ENCODE measurements at regions of chr5 and their contacts with region 1.

Region 1: DNA sequence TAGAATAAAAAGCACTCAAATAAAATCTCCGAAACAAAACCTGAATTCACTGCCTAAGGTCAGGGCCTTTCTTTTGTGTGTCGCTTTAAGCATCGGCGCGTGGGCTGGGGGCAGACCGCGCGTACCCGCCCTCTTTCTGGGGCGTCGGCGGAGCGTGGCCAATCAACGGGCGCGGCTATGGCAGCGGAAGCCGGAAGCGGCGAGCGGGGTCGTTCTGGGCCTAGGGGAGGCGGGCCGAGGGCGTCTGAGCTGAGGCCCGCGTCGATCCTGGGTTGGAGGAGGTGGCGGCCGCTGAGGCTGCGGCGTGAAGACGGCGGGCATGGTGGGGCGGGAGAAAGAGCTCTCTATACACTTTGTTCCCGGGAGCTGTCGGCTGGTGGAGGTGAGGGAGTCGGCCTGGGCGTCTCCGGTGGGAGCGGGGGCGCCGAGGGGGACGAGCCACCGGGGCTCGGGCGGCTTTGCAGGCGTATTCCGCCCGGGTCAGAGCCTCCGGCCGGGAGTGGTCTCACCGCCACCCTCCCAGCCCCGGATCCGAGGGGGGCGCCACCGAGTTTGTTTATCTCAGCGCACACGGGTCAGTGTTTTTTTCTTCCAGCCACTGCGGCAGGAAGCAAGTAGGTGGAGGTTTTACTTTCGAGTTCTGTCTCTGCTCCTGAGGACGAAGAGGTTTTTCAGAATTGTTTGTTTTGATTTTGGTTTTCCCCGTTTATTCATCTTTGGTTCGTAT is at the start of gene MAT2B:
- DNase-seq: peak; percentile 95
- ATAC-seq: peak; percentile 86
- H3K4me3 ChIP-seq: peak within 1 kb of the TSS; percentile 90
- H3K27ac ChIP-seq: peak within 1 kb of the TSS; percentile 56
- H3K4me1 ChIP-seq: peaks cover 33% of the 10 kb centered on the region
- H3K27me3 ChIP-seq: no peaks in the 10 kb centered on the region
- CTCF ChIP-seq: peak; percentile 64
- total RNA-seq, gene MAT2B: 24.3 and 25.6 TPM in 2 replicates

Region 2: GRCh38 chr5:163379298-163380155 is 126.0 kb before region 1 on chr5:
- CTCF ChIA-PET with region 1: no interaction called
- POLR2A ChIA-PET with region 1: no interaction called
- intact Hi-C with region 1: loop called (anchors 5 kb)
- DNase-seq: peak; percentile 94
- ATAC-seq: peak; percentile 91
- H3K4me3 ChIP-seq: peak overlapping the region; percentile 47; the same call in 1 of the 2 replicates
- H3K27ac ChIP-seq: peak overlapping the region; percentile 97
- H3K4me1 ChIP-seq: peaks cover 29% of the 10 kb centered on the region
- H3K27me3 ChIP-seq: no peaks in the 10 kb centered on the region
- CTCF ChIP-seq: no peak

Region 3: DNA sequence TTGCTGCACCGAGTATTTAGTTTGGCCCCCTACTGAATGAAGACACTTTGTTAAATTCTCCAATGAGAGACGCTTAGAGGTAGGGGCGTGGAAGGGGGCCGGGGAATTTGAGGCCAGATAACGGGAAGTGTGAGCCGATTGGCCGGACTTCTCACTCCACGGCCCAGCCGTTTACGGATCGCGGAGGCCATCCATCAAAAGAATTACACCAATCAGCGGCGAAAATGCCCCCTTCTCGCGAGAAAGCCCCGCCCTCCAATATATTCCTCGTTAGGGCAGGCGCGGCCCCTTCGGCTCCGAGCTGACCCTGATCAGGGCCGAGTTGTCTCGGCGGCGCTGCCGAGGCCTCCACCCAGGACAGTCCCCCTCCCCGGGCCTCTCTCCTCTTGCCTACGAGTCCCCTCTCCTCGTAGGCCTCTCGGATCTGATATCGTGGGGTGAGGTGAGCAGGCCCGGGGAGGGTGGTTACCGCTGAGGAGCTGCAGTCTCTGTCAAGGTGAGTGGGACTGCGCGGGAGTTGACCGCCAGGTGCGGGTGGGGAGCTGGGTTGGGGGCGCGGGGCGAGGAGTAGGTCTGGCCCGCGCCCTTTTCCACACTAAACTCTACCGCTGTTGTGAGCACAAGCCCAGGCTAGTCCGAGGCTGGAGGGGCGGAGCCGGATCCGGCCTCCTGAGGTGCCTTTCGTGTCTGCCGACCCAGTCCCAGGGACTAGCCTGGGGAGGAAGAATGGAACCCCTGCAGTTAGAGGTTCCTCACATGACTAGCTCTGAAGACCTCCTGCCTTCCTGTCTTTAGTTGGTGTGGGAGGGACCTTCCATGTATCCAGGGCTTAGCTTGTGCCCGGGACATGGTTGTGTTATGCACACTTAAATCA is 68.0 kb before region 1 on chr5 and contains the start of gene CCNG1:
- CTCF ChIA-PET with region 1: no interaction called
- POLR2A ChIA-PET with region 1: no interaction called
- intact Hi-C with region 1: loop called (anchors 2 kb)
- DNase-seq: peak; percentile 97
- ATAC-seq: peak; percentile 92
- H3K4me3 ChIP-seq: peak within 1 kb of the TSS; percentile 98
- H3K27ac ChIP-seq: 0 out of 2 replicates have a peak within 1 kb of the TSS, but pooled peaks have one; percentile 12
- H3K4me1 ChIP-seq: peaks cover 29% of the 10 kb centered on the region
- H3K27me3 ChIP-seq: no peaks in the 10 kb centered on the region
- CTCF ChIP-seq: no peak
- total RNA-seq, gene CCNG1: 60.9 and 70.0 TPM in 2 replicates

Region 4: GRCh38 chr5:163459922-163460766 is 45.4 kb before region 1 on chr5 and contains the starts of genes HMMR and NUDCD2:
- CTCF ChIA-PET with region 1: no interaction called
- POLR2A ChIA-PET with region 1: no interaction called
- intact Hi-C with region 1: loop called (anchors 1 kb)
- DNase-seq: peak; percentile 98
- ATAC-seq: peak; percentile 80
- H3K4me3 ChIP-seq: peak within 1 kb of the TSS; percentile 82
- H3K27ac ChIP-seq: peak within 1 kb of the TSS; percentile 99
- H3K4me1 ChIP-seq: peaks cover 13% of the 10 kb centered on the region
- H3K27me3 ChIP-seq: no peaks in the 10 kb centered on the region
- CTCF ChIP-seq: peak; percentile 49; the same call in 1 of the 2 replicates
- total RNA-seq, gene HMMR: 44.8 and 74.6 TPM in 2 replicates
- total RNA-seq, gene NUDCD2: 28.3 and 31.2 TPM in 2 replicates

Region 5: DNA sequence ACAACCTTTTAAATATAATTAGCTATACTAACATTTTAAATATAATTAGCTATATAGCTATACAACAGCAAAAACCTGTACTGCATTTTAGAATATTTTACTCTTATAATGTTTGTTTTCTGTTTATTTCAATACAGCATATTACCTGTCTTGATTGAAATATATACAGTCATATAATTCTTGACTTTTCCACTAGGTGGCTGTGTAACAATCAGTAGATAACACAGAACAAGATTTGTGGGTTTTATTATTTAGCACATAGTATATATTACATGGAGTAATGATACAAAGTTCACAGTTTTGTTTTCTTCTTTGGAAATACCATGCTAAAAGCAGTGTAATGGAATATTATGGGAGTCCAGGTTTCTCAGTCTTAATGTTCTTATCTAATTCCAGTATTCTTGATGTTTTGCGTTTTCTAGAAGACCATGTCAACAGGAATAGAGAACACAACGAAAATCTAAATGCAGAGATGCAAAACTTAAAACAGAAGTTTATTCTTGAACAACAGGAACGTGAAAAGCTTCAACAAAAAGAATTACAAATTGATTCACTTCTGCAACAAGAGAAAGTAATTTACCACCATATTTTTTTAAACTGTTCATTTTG is 31.8 kb before region 1 on chr5:
- CTCF ChIA-PET with region 1: no interaction called
- POLR2A ChIA-PET with region 1: interaction called, 5 read pairs
- intact Hi-C with region 1: loop called (anchors 1 kb)
- DNase-seq: peak; percentile 48
- ATAC-seq: peak; percentile 64; the same call in 1 of the 2 replicates
- H3K4me3 ChIP-seq: no peak overlapping the region
- H3K27ac ChIP-seq: no peak overlapping the region
- H3K4me1 ChIP-seq: peaks cover 18% of the 10 kb centered on the region
- H3K27me3 ChIP-seq: no peaks in the 10 kb centered on the region
- CTCF ChIP-seq: peak; percentile 65

Region 6: GRCh38 chr5:163915481-163915961 is 410.0 kb after region 1 on chr5:
- CTCF ChIA-PET with region 1: no interaction called
- POLR2A ChIA-PET with region 1: no interaction called
- intact Hi-C with region 1: no loop called
- DNase-seq: peak; percentile 12
- ATAC-seq: no peak
- H3K4me3 ChIP-seq: no peak overlapping the region
- H3K27ac ChIP-seq: no peak overlapping the region
- H3K4me1 ChIP-seq: no peaks in the 10 kb centered on the region
- H3K27me3 ChIP-seq: no peaks in the 10 kb centered on the region
- CTCF ChIP-seq: no peak